CD4-positive, alpha-beta memory T cell (primary cell): ENCODE measurements at regions of chr9 and their contacts with region 1.

Region 1: GRCh38 chr9:89602978-89603766 is 1.6 kb upstream of the GADD45G start:
- DNase-seq: peak; percentile 85 to 87 (median 85)
- H3K4me3 ChIP-seq: peak overlapping the region; percentile 57 to 79
- H3K4me3 Mint-ChIP-seq: peak overlapping the region; percentile 77 to 97 (median 86)
- H3K27ac ChIP-seq: no peak overlapping the region
- H3K27ac Mint-ChIP-seq: peak overlapping the region; percentile 54 to 98 (median 78)
- H3K4me1 ChIP-seq: peaks cover 35% of the 10 kb centered on the region
- H3K4me1 Mint-ChIP-seq: peaks cover 14 to 40% (median 17%) of the 10 kb centered on the region in 4 donors
- H3K27me3 ChIP-seq: no peaks in the 10 kb centered on the region
- H3K27me3 Mint-ChIP-seq: no peaks in the 10 kb centered on the region

Region 2: DNA sequence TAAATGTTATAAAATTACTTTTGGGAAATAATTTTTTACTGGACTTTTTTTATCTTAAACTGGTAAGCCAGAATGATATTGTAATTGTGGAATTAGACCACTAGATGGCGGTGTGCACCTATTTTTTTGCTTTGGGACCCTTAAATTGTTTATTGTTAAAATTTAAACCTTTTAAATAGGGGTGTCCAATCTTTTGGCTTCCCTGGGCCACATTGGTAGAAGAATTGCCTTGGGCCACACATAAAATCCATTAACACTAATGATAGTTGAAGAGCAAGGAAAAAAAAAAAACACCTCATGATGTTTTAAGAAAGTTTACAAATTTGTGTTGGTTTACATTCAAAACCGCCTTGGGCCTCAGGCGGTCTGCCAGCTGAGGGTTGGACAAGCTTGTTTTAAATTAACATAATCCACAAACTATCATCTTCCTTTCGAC is 26.8 kb before region 1 on chr9:
- CTCF ChIA-PET with region 1: interaction called, 15 read pairs
- POLR2A ChIA-PET with region 1: no interaction called
- intact Hi-C with region 1: no loop called
- DNase-seq: peak in 4 of 5 donors; percentile 16 to 38 (median 24)
- H3K4me3 ChIP-seq: no peak overlapping the region
- H3K4me3 Mint-ChIP-seq: no peak overlapping the region
- H3K27ac ChIP-seq: no peak overlapping the region
- H3K27ac Mint-ChIP-seq: no peak overlapping the region
- H3K4me1 ChIP-seq: peaks cover 5% of the 10 kb centered on the region
- H3K4me1 Mint-ChIP-seq: peaks cover 7 to 12% (median 9%) of the 10 kb centered on the region in 4 donors
- H3K27me3 ChIP-seq: peaks cover 10% of the 10 kb centered on the region
- H3K27me3 Mint-ChIP-seq: peaks cover 32 to 37% of the 10 kb centered on the region in 2 donors

Region 3: GRCh38 chr9:89743573-89744361 is 140.6 kb after region 1 on chr9:
- CTCF ChIA-PET with region 1: interaction called, 6 read pairs
- POLR2A ChIA-PET with region 1: interaction called, 19 read pairs
- intact Hi-C with region 1: loop called (anchors 1 kb)
- DNase-seq: peak; percentile 68 to 77 (median 73)
- H3K4me3 ChIP-seq: peak overlapping the region in 1 of 2 donors; percentile 34
- H3K4me3 Mint-ChIP-seq: peak overlapping the region; percentile 18 to 88 (median 72)
- H3K27ac ChIP-seq: peak overlapping the region; percentile 42
- H3K27ac Mint-ChIP-seq: peak overlapping the region; percentile 77 to 92 (median 83)
- H3K4me1 ChIP-seq: peaks cover 83% of the 10 kb centered on the region
- H3K4me1 Mint-ChIP-seq: peaks cover 61 to 94% (median 80%) of the 10 kb centered on the region in 4 donors
- H3K27me3 ChIP-seq: no peaks in the 10 kb centered on the region
- H3K27me3 Mint-ChIP-seq: no peaks in the 10 kb centered on the region

Region 4: DNA sequence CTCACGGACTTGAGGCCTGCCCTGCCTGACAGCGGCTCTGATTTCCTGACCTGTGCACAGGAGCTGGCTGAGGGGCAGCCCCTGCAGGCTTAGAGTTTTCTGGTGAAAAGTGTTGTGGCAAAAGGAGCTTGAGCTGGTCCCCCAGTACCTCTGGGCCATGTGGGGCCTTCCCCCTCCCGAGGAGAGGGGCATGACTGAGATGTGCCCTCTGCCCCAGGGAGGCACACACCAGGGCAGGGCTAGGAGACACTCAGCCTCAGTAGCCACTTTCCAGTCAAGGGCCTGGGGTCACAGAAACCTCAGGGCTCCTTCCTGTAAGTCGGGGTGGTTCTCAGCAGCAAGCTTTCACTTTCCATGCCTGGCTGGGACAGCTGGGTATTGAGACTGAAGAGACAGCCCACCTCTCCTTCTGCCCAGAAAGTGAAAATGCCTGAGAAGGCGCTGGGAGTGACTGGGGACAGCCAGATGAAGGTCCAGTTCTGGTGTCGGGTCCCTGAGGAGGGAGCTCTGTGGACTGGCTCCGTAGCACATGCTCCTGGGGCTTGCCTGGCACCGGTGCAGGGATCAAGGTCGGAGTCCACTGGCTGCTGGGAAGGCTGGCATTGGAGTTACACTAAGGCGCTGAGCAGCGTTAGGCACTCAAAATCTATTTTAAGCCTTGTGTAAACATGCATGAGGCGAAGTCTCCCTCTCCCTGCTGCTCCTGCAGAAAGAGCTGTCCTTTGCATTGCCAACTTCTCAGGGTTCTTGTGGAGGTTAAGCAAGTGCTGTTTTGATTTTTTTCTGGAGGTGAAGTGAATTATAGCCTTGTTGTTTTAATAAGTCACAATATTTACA is 396.6 kb after region 1 on chr9:
- CTCF ChIA-PET with region 1: interaction called, 6 read pairs
- POLR2A ChIA-PET with region 1: no interaction called
- intact Hi-C with region 1: loop called (anchors 10 kb)
- DNase-seq: peak in 4 of 5 donors; percentile 8 to 28 (median 23)
- H3K4me3 ChIP-seq: peak overlapping the region in 1 of 2 donors; percentile 44
- H3K4me3 Mint-ChIP-seq: peak overlapping the region; percentile 49 to 78 (median 66)
- H3K27ac ChIP-seq: no peak overlapping the region
- H3K27ac Mint-ChIP-seq: peak overlapping the region in 6 of 7 donors; percentile 37 to 93 (median 55)
- H3K4me1 ChIP-seq: peaks cover 19% of the 10 kb centered on the region
- H3K4me1 Mint-ChIP-seq: peaks cover 14 to 26% (median 24%) of the 10 kb centered on the region in 4 donors
- H3K27me3 ChIP-seq: no peaks in the 10 kb centered on the region
- H3K27me3 Mint-ChIP-seq: peaks cover 0 to 2% of the 10 kb centered on the region in 2 donors

Region 5: GRCh38 chr9:90142580-90142979 is 539.4 kb after region 1 on chr9:
- CTCF ChIA-PET with region 1: interaction called, 5 read pairs
- POLR2A ChIA-PET with region 1: no interaction called
- intact Hi-C with region 1: loop called (anchors 5 kb)
- DNase-seq: peak in 4 of 5 donors; percentile 42 to 52 (median 49)
- H3K4me3 ChIP-seq: no peak overlapping the region
- H3K4me3 Mint-ChIP-seq: no peak overlapping the region
- H3K27ac ChIP-seq: no peak overlapping the region
- H3K27ac Mint-ChIP-seq: no peak overlapping the region
- H3K4me1 ChIP-seq: peaks cover 5% of the 10 kb centered on the region
- H3K4me1 Mint-ChIP-seq: peaks cover 0 to 6% (median 4%) of the 10 kb centered on the region in 4 donors
- H3K27me3 ChIP-seq: no peaks in the 10 kb centered on the region
- H3K27me3 Mint-ChIP-seq: peaks cover 23 to 32% of the 10 kb centered on the region in 2 donors